ENCODE measurements at regions of chr1 and their contacts with region 1.

Region 1: GRCh38 chr1:36463803-36464604 is at the start of gene MRPS15:
- DNase-seq: peak; percentile 98
- ATAC-seq: peak; percentile 94
- H3K4me3 Mint-ChIP-seq: peak within 1 kb of the TSS; percentile 97
- H3K27ac Mint-ChIP-seq: peak within 1 kb of the TSS; percentile 97
- H3K4me1 Mint-ChIP-seq: peaks cover 31% of the 10 kb centered on the region
- H3K27me3 Mint-ChIP-seq: no peaks in the 10 kb centered on the region
- total RNA-seq, gene MRPS15: 123 to 169 TPM

Region 2: GRCh38 chr1:36397378-36398230 is 66.4 kb before region 1 on chr1 and contains the start of gene LSM10:
- CTCF ChIA-PET with region 1: no interaction called
- POLR2A ChIA-PET with region 1: no interaction called
- intact Hi-C with region 1: loop called in 1 of 2 experiments (anchors 1 kb)
- DNase-seq: peak; percentile 96
- ATAC-seq: peak; percentile 89
- H3K4me3 Mint-ChIP-seq: peak within 1 kb of the TSS; percentile 90
- H3K27ac Mint-ChIP-seq: peak within 1 kb of the TSS; percentile 99
- H3K4me1 Mint-ChIP-seq: peaks cover 25% of the 10 kb centered on the region
- H3K27me3 Mint-ChIP-seq: no peaks in the 10 kb centered on the region
- total RNA-seq, gene LSM10: 40.6 to 44.0 TPM

Region 3: DNA sequence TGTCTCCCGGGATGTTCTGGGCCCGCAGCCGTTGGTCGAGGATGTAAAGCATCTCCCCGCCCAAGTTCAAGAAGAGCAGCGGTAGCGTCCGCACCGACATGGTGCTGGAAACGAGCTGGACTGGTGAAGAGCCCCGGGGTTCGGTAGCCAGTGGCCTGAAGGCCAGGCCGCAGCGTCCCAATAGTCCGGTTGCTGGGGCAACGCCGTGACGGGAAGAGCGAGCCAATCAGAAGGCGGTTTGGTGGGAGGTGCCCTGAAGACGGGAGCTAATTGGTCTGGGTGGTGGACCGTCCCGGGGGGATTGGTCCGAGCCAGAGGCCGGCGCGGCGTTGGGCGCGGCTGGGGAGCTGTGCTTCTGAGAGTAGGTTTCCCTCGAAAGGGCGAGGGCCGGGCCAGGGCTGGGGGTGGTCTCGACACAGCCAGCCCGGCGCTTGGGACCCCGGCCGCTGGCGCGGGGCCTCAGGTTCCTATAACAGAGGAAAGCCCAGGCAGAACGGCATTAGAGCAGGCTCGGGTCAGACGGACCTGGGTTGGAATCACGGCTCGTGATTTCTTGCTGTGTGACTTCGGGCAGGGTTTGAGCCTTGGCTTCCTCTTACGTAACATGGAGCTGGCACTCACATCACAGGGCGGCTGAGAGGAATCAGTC is 13.6 kb before region 1 on chr1 and contains the start of gene OSCP1:
- CTCF ChIA-PET with region 1: interaction called, 3 read pairs
- POLR2A ChIA-PET with region 1: interaction called, 10 read pairs
- intact Hi-C with region 1: loop called (anchors 1 to 2 kb)
- DNase-seq: peak; percentile 91
- ATAC-seq: peak; percentile 98
- H3K4me3 Mint-ChIP-seq: peak within 1 kb of the TSS; percentile 83
- H3K27ac Mint-ChIP-seq: peak within 1 kb of the TSS; percentile 83
- H3K4me1 Mint-ChIP-seq: peaks cover 16% of the 10 kb centered on the region
- H3K27me3 Mint-ChIP-seq: no peaks in the 10 kb centered on the region
- total RNA-seq, gene OSCP1: 2.2 to 2.8 TPM

Region 4: GRCh38 chr1:36737767-36738166 is 273.8 kb after region 1 on chr1:
- CTCF ChIA-PET with region 1: no interaction called
- POLR2A ChIA-PET with region 1: no interaction called
- intact Hi-C with region 1: no loop called
- DNase-seq: no peak
- ATAC-seq: no peak
- H3K4me3 Mint-ChIP-seq: no peak overlapping the region
- H3K27ac Mint-ChIP-seq: no peak overlapping the region
- H3K4me1 Mint-ChIP-seq: no peaks in the 10 kb centered on the region
- H3K27me3 Mint-ChIP-seq: peaks cover 27% of the 10 kb centered on the region

Region 5: GRCh38 chr1:37514350-37515184 is 1050.6 kb after region 1 on chr1 and contains the start of gene MEAF6:
- CTCF ChIA-PET with region 1: no interaction called
- POLR2A ChIA-PET with region 1: no interaction called
- intact Hi-C with region 1: loop called in 1 of 2 experiments (anchors 1 kb)
- DNase-seq: peak; percentile 91
- ATAC-seq: peak; percentile 88
- H3K4me3 Mint-ChIP-seq: peak within 1 kb of the TSS; percentile 87
- H3K27ac Mint-ChIP-seq: peak within 1 kb of the TSS; percentile 93
- H3K4me1 Mint-ChIP-seq: peaks cover 41% of the 10 kb centered on the region
- H3K27me3 Mint-ChIP-seq: no peaks in the 10 kb centered on the region
- total RNA-seq, gene MEAF6: 66.8 to 72.2 TPM

Region 6: GRCh38 chr1:37859507-37860345 is 1395.7 kb after region 1 on chr1 and contains the start of gene MTF1:
- CTCF ChIA-PET with region 1: no interaction called
- POLR2A ChIA-PET with region 1: no interaction called
- intact Hi-C with region 1: loop called in 1 of 2 experiments (anchors 1 kb)
- DNase-seq: peak; percentile 98
- ATAC-seq: peak; percentile 98
- H3K4me3 Mint-ChIP-seq: peak within 1 kb of the TSS; percentile 87
- H3K27ac Mint-ChIP-seq: peak within 1 kb of the TSS; percentile 93
- H3K4me1 Mint-ChIP-seq: peaks cover 40% of the 10 kb centered on the region
- H3K27me3 Mint-ChIP-seq: no peaks in the 10 kb centered on the region
- total RNA-seq, gene MTF1: 16.1 to 23.8 TPM

Measured in activated CD4-positive, alpha-beta T cell treated with anti-CD3 and anti-CD28 coated beads for 36 hours (primary cell).